HEK293 (cell line): ENCODE measurements at regions of chr15 and their contacts with region 1.

Region 1: DNA sequence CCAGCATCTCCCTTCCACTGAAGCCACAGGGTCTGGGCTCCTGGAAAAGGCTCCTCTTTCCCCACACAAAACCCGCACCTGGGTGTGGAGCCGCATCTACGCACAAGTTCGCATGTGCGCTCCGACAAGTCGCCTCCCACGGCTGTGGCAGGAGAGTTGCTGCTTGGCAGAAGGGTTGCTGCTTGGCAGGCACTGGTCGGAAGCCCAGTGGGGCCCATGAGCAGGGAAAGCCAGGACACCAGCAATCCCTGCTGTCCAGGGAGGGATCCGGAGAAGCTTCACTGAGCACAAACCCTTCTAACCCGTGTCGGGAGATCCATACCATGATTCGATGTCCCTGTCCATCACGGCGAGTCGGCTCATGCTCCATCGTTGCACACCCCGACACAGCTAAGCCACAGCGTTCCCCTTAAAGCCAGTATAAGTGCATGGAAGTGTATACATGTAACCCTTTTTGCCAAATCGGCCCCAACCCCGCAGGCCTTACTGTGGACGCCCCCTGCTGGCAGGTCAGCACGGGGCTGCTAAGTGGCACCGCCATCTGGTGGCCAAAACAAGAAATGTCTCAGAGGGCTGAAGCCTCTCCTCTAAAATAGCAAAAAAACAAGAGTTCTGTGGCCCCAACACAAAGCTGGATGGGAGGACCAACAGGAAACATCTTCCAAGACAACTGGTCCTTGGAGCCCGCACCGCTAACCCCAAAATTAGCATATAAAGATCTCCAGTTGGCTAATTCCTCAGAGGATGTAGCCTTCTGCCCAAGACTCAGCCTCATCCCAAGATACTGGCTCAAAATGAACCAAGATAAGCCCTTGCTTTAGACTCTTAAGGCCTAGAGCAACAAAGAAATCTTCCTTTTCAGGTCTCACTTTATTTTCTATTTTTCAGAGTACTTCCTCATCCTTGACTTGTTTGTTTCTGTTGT is 8.3 kb downstream of the ANKRD63 start:
- H3K4me3 ChIP-seq: no peak overlapping the region
- H3K27ac ChIP-seq: no peak overlapping the region
- H3K4me1 ChIP-seq: no peaks in the 10 kb centered on the region
- CTCF ChIP-seq: peak; percentile 98

Region 2: GRCh38 chr15:40044717-40045571 is 229.7 kb before region 1 on chr15:
- CTCF ChIA-PET with region 1: interaction called, 57 read pairs
- POLR2A ChIA-PET with region 1: interaction called, 3 read pairs
- H3K4me3 ChIP-seq: no peak overlapping the region
- H3K27ac ChIP-seq: peak overlapping the region; percentile 28; the same call in 1 of the 2 replicates
- H3K4me1 ChIP-seq: peaks cover 14% of the 10 kb centered on the region
- CTCF ChIP-seq: peak; percentile 94

Region 3: GRCh38 chr15:40130799-40131502 is 143.7 kb before region 1 on chr15:
- CTCF ChIA-PET with region 1: no interaction called
- POLR2A ChIA-PET with region 1: no interaction called
- H3K4me3 ChIP-seq: no peak overlapping the region
- H3K27ac ChIP-seq: no peak overlapping the region
- H3K4me1 ChIP-seq: no peaks in the 10 kb centered on the region
- CTCF ChIP-seq: no peak

Region 4: GRCh38 chr15:40182358-40183029 is 92.1 kb before region 1 on chr15:
- CTCF ChIA-PET with region 1: no interaction called
- POLR2A ChIA-PET with region 1: no interaction called
- H3K4me3 ChIP-seq: no peak overlapping the region
- H3K27ac ChIP-seq: no peak overlapping the region
- H3K4me1 ChIP-seq: no peaks in the 10 kb centered on the region
- CTCF ChIP-seq: no peak

Region 5: DNA sequence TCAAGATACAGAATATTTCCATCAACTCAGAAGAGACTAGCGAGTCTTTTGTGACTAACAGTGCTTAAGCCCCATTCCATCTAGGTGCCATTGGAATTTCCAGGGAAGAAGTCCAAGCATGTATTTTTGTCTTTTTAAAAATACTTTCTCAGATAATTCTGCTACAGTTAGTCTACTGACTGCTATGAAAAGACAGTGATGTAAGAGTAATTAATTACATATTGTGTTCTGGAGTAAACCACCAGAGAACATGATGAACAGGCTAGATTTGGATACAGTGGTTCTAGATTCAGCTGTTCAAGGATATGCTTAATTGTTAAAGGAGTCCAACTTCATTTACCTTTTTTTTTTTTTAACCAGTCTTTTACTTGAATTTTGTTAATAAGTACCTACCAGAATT is 70.5 kb before region 1 on chr15:
- CTCF ChIA-PET with region 1: interaction called, 27 read pairs
- POLR2A ChIA-PET with region 1: no interaction called
- H3K4me3 ChIP-seq: no peak overlapping the region
- H3K27ac ChIP-seq: no peak overlapping the region
- H3K4me1 ChIP-seq: no peaks in the 10 kb centered on the region
- CTCF ChIP-seq: no peak

Region 6: GRCh38 chr15:40226736-40227135 is 47.9 kb before region 1 on chr15:
- CTCF ChIA-PET with region 1: interaction called, 210 read pairs
- POLR2A ChIA-PET with region 1: no interaction called
- H3K4me3 ChIP-seq: no peak overlapping the region
- H3K27ac ChIP-seq: no peak overlapping the region
- H3K4me1 ChIP-seq: no peaks in the 10 kb centered on the region
- CTCF ChIP-seq: no peak

Region 7: DNA sequence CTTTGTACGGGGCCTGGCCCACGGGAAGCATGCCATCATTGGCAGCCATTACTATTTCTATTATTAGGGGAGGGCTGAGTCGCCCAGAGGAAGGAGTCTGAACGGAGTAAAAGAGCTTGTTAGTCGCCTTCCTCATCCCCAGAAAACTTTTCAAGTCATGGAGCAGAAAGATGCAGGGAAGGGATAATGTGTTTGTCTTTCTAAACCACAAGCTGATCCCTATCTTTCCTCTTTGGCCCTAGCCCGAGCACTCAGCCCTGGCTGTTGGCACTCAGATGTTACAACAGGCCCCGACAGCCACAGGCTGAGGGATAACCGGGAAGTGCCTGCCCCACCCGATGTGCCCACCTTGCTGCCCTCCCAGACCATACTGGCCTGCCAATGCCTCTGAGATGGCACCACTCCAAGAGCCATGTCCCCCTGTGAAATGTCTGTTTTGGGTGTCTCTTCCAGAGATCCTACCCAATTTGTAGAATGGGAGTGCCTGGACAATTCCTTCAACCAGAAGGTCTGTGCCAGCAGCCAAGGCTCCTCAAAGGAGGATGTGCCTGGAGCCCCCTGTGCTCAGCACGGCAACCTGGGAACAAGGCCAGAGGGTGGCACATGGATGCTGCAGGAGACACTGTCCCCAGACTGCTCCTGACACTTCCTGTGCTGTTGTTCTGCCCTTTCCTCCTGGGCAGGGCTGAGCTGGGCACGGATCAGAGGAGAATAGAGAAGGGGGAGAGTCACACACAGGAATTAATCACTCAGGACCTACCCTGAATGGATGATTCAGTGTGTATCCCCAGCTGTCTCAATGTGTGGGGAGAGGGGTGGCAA is 24.9 kb before region 1 on chr15:
- CTCF ChIA-PET with region 1: interaction called, 68 read pairs
- POLR2A ChIA-PET with region 1: no interaction called
- H3K4me3 ChIP-seq: no peak overlapping the region
- H3K27ac ChIP-seq: peak overlapping the region; percentile 17; the same call in 1 of the 2 replicates
- H3K4me1 ChIP-seq: peaks cover 4% of the 10 kb centered on the region; the same call in 1 of the 2 replicates
- CTCF ChIP-seq: no peak

Region 8: DNA sequence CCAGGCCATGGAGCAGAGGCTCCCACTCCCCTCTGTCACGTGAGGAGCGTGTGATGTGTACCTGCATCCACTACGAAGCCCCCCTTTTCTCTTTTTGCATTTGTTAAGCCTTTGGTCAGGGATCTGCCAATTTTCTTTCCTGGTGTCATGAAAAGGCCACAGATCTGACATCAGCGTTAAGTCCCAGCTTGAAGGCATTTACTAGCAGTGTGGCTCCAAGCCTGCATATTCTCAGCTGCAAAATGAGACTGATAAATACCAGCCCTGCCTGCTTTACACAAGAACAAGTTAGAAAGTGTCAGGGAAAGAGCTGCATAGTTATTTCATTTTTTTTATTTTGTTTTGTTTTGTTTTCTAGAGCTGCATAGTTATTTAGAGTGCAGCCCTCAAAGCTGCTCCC is 10.5 kb after region 1 on chr15:
- CTCF ChIA-PET with region 1: interaction called, 22 read pairs
- POLR2A ChIA-PET with region 1: no interaction called
- H3K4me3 ChIP-seq: no peak overlapping the region
- H3K27ac ChIP-seq: no peak overlapping the region
- H3K4me1 ChIP-seq: peaks cover 6% of the 10 kb centered on the region
- CTCF ChIP-seq: no peak

Region 9: DNA sequence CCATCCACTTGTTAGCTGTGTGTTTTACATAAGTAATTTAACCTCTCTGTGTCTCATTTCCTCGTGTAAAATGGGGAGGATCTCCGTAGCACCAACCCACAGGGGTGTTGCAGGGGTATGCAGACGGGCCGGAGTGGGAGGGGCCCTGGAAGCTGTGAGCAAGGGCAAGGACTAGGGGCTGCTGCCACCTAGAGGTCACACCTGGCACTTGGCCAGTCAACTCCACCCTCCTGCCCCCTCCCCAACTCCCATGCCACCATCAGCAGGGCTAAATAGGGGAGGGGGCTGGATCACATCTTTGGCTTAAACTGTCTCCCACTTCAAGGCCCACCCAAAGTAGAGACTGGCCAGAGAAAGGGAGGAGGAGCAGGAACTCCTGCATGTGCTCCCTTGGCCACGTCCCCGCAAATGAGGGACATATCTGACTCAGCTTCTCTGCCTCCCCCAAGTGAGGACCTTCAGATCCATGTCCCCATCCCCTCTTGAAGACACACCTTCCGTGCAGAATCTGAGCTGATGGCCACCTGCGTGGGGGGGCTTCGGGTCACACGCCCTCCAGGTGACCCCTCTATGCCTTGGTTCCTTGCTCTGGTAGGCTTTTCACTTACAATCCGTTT is 63.5 kb after region 1 on chr15:
- CTCF ChIA-PET with region 1: interaction called, 53 read pairs
- POLR2A ChIA-PET with region 1: no interaction called
- H3K4me3 ChIP-seq: no peak overlapping the region
- H3K27ac ChIP-seq: no peak overlapping the region
- H3K4me1 ChIP-seq: peaks cover 10% of the 10 kb centered on the region
- CTCF ChIP-seq: peak; percentile 84